Adrenal gland (tissue), 19 donors: ENCODE measurements at regions of chr5 and their contacts with region 1.

Region 1: GRCh38 chr5:39080597-39081204 is 6.5 kb upstream of the RICTOR start:
- DNase-seq: peak; percentile 60 to 74 (median 63)
- H3K4me3 ChIP-seq: no peak overlapping the region
- H3K27ac ChIP-seq: no peak overlapping the region
- H3K4me1 ChIP-seq: peaks cover 2 to 13% of the 10 kb centered on the region in 2 donors
- H3K27me3 ChIP-seq: no peaks in the 10 kb centered on the region
- CTCF ChIP-seq: peak; percentile 88 to 96 (median 88)
- POLR2A ChIP-seq: no peak

Region 2: DNA sequence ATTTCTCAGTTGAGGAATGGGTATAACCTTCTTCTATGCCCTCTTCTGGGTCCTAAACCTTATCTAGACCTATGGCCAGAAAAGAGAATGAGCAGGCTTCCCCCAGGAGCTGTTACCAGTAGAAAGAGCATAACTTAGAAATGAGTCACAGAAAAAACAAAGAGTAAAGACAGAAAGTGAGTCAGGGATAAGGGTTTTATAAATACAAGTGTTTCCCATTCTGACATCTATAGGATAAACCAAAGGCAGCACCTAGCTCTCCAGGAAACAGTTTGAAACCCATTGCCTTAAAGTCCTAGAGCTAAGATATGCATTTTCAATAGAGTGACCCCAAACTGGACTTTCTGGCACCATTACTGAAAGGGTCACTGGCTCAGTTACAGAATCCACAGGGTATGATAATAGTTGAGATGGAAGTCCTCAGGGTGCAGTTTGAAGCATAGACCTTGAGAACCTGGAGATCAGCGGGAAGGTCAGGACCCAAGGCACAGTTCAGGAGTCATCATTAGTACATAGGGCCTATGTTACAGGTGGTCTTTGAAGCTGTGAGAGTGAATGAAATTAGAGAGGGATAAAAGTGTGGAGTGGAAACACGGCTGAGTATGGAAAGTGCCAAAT is 481.6 kb before region 1 on chr5:
- intact Hi-C with region 1: no loop called
- DNase-seq: no peak
- H3K4me3 ChIP-seq: no peak overlapping the region
- H3K27ac ChIP-seq: no peak overlapping the region
- H3K4me1 ChIP-seq: peaks cover 0 to 12% of the 10 kb centered on the region in 2 donors
- H3K27me3 ChIP-seq: no peaks in the 10 kb centered on the region
- CTCF ChIP-seq: no peak
- POLR2A ChIP-seq: no peak

Region 3: GRCh38 chr5:38994324-38994927 is 86.3 kb before region 1 on chr5:
- intact Hi-C with region 1: loop called in 1 of 2 experiments (anchors 5 kb)
- DNase-seq: peak; percentile 28 to 64 (median 48)
- H3K4me3 ChIP-seq: no peak overlapping the region
- H3K27ac ChIP-seq: no peak overlapping the region
- H3K4me1 ChIP-seq: peaks cover 0 to 5% of the 10 kb centered on the region in 2 donors
- H3K27me3 ChIP-seq: no peaks in the 10 kb centered on the region
- CTCF ChIP-seq: peak; percentile 17 to 66 (median 56)
- POLR2A ChIP-seq: no peak

Region 4: GRCh38 chr5:39217365-39218281 is 136.9 kb after region 1 on chr5:
- intact Hi-C with region 1: no loop called
- DNase-seq: peak; percentile 72 to 90 (median 81)
- H3K4me3 ChIP-seq: no peak overlapping the region
- H3K27ac ChIP-seq: no peak overlapping the region
- H3K4me1 ChIP-seq: peaks cover 0 to 8% of the 10 kb centered on the region in 2 donors
- H3K27me3 ChIP-seq: no peaks in the 10 kb centered on the region
- CTCF ChIP-seq: peak; percentile 88 to 98 (median 95)
- POLR2A ChIP-seq: no peak

Region 5: GRCh38 chr5:39616131-39616530 is 535.4 kb after region 1 on chr5:
- intact Hi-C with region 1: no loop called
- DNase-seq: no peak
- H3K4me3 ChIP-seq: no peak overlapping the region
- H3K27ac ChIP-seq: no peak overlapping the region
- H3K4me1 ChIP-seq: no peaks in the 10 kb centered on the region
- H3K27me3 ChIP-seq: no peaks in the 10 kb centered on the region
- CTCF ChIP-seq: no peak
- POLR2A ChIP-seq: no peak